Pancreas (tissue), 10 donors: ENCODE measurements at regions of chrX and their contacts with region 1.

Region 1: GRCh38 chrX:47849778-47850177 is 13.1 kb downstream of the ZNF81 start:
- DNase-seq: no peak
- ATAC-seq: no peak
- H3K4me3 ChIP-seq: no peak overlapping the region
- H3K27ac ChIP-seq: no peak overlapping the region
- H3K4me1 ChIP-seq: no peaks in the 10 kb centered on the region
- H3K27me3 ChIP-seq: no peaks in the 10 kb centered on the region
- CTCF ChIP-seq: no peak

Region 2: GRCh38 chrX:47650164-47651042 is 199.4 kb before region 1 on chrX and contains the start of gene ELK1:
- intact Hi-C with region 1: no loop called
- DNase-seq: peak; percentile 86 to 96 (median 94)
- ATAC-seq: peak; percentile 93 to 96 (median 94)
- H3K4me3 ChIP-seq: peak within 1 kb of the TSS; percentile 33 to 56 (median 40)
- H3K27ac ChIP-seq: peak within 1 kb of the TSS; percentile 51 to 73 (median 62)
- H3K4me1 ChIP-seq: no peaks in the 10 kb centered on the region
- H3K27me3 ChIP-seq: no peaks in the 10 kb centered on the region
- CTCF ChIP-seq: no peak
- total RNA-seq, gene ELK1: 5.8 to 14.6 (median 10.4) TPM

Region 3: GRCh38 chrX:48021026-48021900 is 171.5 kb after region 1 on chrX:
- intact Hi-C with region 1: loop called in 1 of 3 experiments (anchors 10 kb)
- DNase-seq: peak in 4 of 6 donors; percentile 56 to 76 (median 72)
- ATAC-seq: peak; percentile 84 to 89 (median 88)
- H3K4me3 ChIP-seq: peak overlapping the region; percentile 2 to 49 (median 36)
- H3K27ac ChIP-seq: peak overlapping the region; percentile 66 to 89 (median 86)
- H3K4me1 ChIP-seq: no peaks in the 10 kb centered on the region
- H3K27me3 ChIP-seq: no peaks in the 10 kb centered on the region
- CTCF ChIP-seq: no peak

Region 4: GRCh38 chrX:48035891-48036290 is 186.1 kb after region 1 on chrX:
- intact Hi-C with region 1: loop called in 1 of 3 experiments (anchors 10 kb)
- DNase-seq: no peak
- ATAC-seq: no peak
- H3K4me3 ChIP-seq: no peak overlapping the region
- H3K27ac ChIP-seq: no peak overlapping the region
- H3K4me1 ChIP-seq: no peaks in the 10 kb centered on the region
- H3K27me3 ChIP-seq: no peaks in the 10 kb centered on the region
- CTCF ChIP-seq: no peak